HEK293T (cell line): ENCODE measurements at regions of chr10 and their contacts with region 1.

Region 1: GRCh38 chr10:35195361-35196306 is 69.0 kb downstream of the CREM start:
- DNase-seq: peak; percentile 35

Region 2: DNA sequence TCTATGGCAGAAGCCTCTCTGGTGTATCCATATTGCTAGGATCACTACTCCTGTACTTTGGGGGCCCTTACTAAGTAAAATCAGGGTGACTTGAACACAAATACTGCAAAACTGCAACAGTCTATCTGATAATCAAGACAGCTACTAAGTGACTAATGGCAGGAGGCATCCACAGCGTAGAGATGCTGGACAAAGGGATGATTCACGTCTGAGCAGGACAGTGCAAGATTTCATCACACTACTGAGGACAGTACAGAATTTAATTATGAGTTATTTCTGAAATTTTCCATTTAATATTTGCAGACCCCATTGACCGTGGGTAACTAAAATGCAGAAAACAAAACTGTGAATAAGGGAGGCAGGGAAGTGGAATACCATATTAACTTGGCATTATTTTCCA is 115.9 kb before region 1 on chr10:
- CTCF ChIA-PET with region 1: no interaction called
- POLR2A ChIA-PET with region 1: no interaction called
- DNase-seq: no peak

Region 3: DNA sequence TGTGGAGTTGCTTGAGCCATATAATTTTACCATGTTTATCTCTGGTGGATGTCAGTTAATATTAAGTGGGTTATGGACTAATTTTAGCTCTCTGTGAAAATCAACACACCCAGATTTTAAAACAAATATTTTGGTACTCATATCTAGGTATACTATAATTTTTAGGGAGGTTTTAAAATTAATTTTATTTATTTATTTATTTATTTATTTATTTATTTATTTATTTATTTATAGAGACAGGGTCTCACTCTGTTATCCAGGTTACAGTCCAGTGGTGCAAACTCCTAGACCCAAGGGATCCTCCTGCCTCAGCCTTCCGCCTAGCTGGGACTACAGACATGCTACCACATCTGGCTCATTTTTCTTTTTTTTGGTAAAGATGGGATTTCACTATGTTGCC is 76.3 kb before region 1 on chr10:
- CTCF ChIA-PET with region 1: interaction called, 12 read pairs
- POLR2A ChIA-PET with region 1: interaction called, 6 read pairs
- DNase-seq: no peak

Region 4: GRCh38 chr10:35126530-35127296 is 68.9 kb before region 1 on chr10 and contains the start of gene CREM:
- CTCF ChIA-PET with region 1: interaction called, 27 read pairs
- POLR2A ChIA-PET with region 1: interaction called, 64 read pairs
- DNase-seq: peak; percentile 90

Region 5: DNA sequence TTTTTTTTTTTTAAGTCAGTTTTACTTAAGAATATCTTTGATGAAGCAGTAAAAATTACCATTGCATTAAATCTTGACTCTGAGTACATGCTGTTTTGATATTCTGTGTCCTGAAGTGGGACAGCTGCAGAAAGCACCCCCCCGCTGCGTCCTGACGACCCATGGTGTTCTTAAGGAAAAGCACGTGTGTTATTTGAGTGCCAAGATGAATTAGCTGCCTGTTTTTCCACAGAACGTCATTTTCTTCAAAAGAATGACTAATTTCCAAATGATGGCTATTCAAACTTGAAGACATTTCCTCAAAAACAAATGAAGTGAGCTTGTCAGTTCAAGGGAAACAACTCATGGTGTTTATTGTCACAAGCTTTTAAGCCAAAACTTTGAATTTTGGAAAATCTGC is 23.1 kb before region 1 on chr10:
- CTCF ChIA-PET with region 1: interaction called, 8 read pairs
- POLR2A ChIA-PET with region 1: interaction called, 10 read pairs
- DNase-seq: no peak

Region 6: GRCh38 chr10:35212856-35213255 is 17.2 kb after region 1 on chr10:
- CTCF ChIA-PET with region 1: interaction called, 8 read pairs
- POLR2A ChIA-PET with region 1: interaction called, 10 read pairs
- DNase-seq: no peak

Region 7: DNA sequence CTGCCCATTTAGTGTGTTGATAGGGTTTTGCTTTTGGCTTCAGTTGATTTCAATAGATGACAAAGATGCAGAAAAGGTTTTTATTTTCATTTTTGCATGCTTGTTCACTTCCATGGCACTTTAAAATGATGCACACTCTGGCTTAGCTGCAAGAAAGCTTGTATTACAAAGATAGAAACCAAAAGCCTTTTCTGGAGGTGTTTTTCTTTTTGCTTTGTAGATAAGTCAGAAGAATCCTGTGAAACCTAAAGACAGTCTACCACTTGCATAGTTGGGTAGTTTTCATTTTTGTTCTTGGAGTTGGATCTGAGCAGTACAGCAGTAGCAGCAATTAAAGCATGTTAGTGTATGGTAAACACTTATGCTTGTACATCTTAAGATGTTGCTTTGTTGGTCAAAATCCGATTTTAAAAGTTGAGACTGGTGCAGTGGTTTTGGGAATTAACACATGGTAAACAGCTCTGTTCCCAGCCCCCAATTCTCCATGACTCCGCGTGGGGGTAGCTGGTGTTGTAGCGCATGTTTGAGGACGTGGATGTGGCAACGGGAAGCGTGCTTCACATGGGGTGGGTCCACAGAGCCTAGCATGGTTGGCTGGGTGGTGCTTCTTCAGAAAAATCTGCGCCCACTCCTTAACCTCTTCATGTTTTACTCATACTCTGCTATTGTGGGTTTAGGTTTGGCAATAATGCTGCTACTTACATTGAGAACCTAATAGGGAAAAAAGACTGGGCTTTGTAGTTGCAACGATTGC is 160.5 kb after region 1 on chr10:
- CTCF ChIA-PET with region 1: no interaction called
- POLR2A ChIA-PET with region 1: no interaction called
- DNase-seq: no peak